Lower leg skin (tissue), 4 donors: ENCODE measurements at regions of chr6 and their contacts with region 1.

Region 1: GRCh38 chr6:42726485-42727086 is 4.2 kb upstream of the PRPH2 start:
- DNase-seq: peak; percentile 73 to 91
- H3K4me3 ChIP-seq: peak overlapping the region; percentile 25
- CTCF ChIP-seq: peak in 1 of 3 donors; percentile 84
- POLR2A ChIP-seq: no peak

Region 2: GRCh38 chr6:42661540-42662153 is 64.9 kb before region 1 on chr6:
- intact Hi-C with region 1: loop called (anchors 10 kb)
- DNase-seq: peak; percentile 77 to 95
- H3K4me3 ChIP-seq: no peak overlapping the region
- CTCF ChIP-seq: peak in 1 of 3 donors; percentile 59
- POLR2A ChIP-seq: no peak

Region 3: DNA sequence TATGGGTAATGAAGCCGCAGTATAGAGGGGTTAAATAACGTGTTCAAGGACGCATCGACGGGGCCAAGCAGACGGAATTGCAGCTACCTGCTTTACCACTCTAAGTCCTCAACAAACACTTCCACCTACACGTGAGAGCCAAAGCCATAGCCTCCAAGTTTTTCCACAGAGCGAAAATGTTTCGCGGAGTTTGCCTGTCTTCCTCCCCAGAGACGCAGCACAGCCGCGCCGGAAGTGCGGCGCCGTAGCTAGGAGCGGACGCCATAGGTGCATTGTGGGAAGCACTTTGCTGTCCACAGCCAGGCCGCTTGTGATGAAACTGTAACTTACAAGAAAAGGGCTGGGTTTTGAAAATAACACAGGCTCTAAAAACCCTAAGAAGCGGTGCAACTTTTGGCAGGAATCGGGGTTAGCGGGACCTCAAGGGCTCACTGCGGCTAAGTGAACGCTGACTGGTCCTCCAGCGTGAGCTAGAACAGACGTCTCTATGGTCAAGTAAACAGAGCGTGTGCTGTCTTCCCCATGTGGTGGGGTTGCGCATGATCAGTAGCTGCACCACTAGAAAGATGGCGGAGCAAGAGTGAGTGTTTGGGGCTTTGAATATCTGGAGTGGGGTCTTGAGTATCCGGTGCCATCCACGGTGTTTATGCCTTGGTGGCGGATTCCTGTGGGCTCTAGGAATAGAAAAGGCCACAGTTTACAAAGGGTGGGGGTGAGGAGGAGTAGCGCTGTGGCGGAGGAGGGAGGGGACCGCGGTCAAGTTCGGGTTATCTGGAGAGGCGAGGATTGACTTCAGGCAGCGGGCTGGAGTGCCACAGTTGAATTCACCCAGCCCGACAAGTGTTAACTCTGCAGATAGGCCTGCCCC is 153.0 kb after region 1 on chr6 and contains the start of gene RPL7L1:
- intact Hi-C with region 1: loop called (anchors 10 kb)
- DNase-seq: peak; percentile 83 to 94
- H3K4me3 ChIP-seq: peak within 1 kb of the TSS; percentile 64
- CTCF ChIP-seq: no peak
- POLR2A ChIP-seq: peak in 1 of 2 donors; percentile 7
- total RNA-seq, gene RPL7L1: 73.4 to 95.9 (median 80.9) TPM